GM12878 (cell line): ENCODE measurements at regions of chr15 and their contacts with region 1.

Region 1: DNA sequence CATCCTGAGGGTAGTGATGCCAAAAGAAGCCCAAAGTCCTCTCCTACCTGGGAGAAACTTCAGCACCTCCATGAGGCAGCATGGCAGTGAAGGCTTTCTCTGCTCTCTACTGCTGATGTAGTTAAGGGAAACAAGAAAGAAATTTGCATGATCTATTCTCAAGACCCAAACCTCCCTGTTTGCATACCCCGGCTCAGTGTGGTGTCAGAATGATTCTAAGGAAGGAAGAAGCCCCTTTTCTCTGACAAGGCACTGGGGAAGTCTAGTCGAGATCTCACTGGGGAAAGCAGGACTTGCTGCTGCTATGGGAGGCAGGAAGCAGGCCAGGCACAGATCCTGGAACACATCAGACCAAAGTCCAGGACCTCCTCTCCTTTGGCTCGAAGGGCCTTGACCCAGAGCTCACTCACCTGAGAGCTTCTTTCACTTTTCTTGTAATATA is 89.4 kb upstream of the ICE2 start:
- DNase-seq: peak; percentile 87
- ATAC-seq: peak; percentile 79
- H3K4me3 ChIP-seq: peak overlapping the region; percentile 26
- H3K27ac ChIP-seq: peak overlapping the region; percentile 93
- H3K4me1 ChIP-seq: peaks cover 75% of the 10 kb centered on the region
- H3K27me3 ChIP-seq: no peaks in the 10 kb centered on the region
- CTCF ChIP-seq: no peak
- EP300 ChIP-seq: peak in 1 of 2 experiments; percentile 61; a peak in 2 of 4 replicates
- POLR2A ChIP-seq: peak; percentile 79
- RAD21 ChIP-seq: no peak

Region 2: GRCh38 chr15:60444289-60444912 is 123.9 kb before region 1 on chr15:
- CTCF ChIA-PET with region 1: no interaction called
- POLR2A ChIA-PET with region 1: no interaction called
- RAD21 ChIA-PET with region 1: no interaction called
- SMC1A ChIA-PET with region 1: no interaction called
- in situ Hi-C with region 1: no loop called
- intact Hi-C with region 1: no loop called
- DNase-seq: no peak
- ATAC-seq: no peak
- H3K4me3 ChIP-seq: no peak overlapping the region
- H3K27ac ChIP-seq: no peak overlapping the region
- H3K4me1 ChIP-seq: no peaks in the 10 kb centered on the region
- H3K27me3 ChIP-seq: no peaks in the 10 kb centered on the region
- CTCF ChIP-seq: no peak; a peak in 1 of 6 replicates
- EP300 ChIP-seq: no peak
- POLR2A ChIP-seq: no peak
- RAD21 ChIP-seq: no peak

Region 3: DNA sequence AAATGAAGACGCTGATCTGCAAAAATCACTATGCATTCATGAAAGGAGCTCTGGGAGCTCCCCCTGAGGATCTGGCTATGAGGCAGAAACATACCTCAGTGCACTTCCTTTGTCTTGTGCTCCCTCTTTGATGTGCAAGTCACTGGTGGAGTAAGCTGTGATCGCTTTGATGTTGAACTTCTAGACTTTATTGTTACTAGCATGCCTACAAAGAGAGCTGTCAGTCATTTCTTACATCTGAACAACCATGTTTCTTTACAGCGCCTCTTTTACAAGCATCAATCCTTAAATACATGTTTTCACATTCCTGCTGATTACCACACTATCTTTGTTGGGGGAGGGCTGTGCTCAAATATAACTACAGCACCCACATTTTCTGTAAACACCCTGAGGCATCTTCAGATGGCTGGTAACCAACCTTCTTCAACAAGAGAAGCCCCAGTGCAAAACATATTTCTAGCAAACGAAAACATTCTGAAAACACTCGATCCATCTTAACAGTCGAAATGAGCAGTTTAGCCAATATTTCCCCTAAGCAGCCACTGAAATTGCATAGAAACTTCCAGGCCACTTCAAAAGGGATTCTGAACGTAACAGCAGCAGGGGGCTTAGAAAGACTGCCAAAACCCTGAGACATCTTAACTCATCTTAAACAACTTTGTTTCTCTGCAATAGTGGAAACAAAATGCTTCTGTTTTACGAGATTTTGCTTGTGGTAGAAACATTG is 12.5 kb after region 1 on chr15:
- CTCF ChIA-PET with region 1: interaction called, 143 read pairs
- POLR2A ChIA-PET with region 1: interaction called, 37 read pairs
- RAD21 ChIA-PET with region 1: interaction called, 309 read pairs
- SMC1A ChIA-PET with region 1: interaction called, 480 read pairs
- in situ Hi-C with region 1: no loop called
- intact Hi-C with region 1: loop called (anchors 2 kb)
- DNase-seq: no peak
- ATAC-seq: peak; percentile 36
- H3K4me3 ChIP-seq: peak overlapping the region; percentile 41; the same call in 1 of the 2 replicates
- H3K27ac ChIP-seq: peak overlapping the region; percentile 94
- H3K4me1 ChIP-seq: peaks cover 64% of the 10 kb centered on the region
- H3K27me3 ChIP-seq: no peaks in the 10 kb centered on the region
- CTCF ChIP-seq: no peak
- EP300 ChIP-seq: no peak
- POLR2A ChIP-seq: no peak
- RAD21 ChIP-seq: no peak